ENCODE measurements at regions of chr14 and their contacts with region 1.

Region 1: GRCh38 chr14:34461334-34462131 is 507 bp downstream of the SPTSSA start:
- DNase-seq: peak in 1 of 2 donors; percentile 66
- ATAC-seq: peak; percentile 65
- H3K4me3 ChIP-seq: peak overlapping the region; percentile 63 to 95
- H3K27ac ChIP-seq: peak overlapping the region; percentile 67 to 98
- H3K4me1 ChIP-seq: no peaks in the 10 kb centered on the region
- H3K27me3 ChIP-seq: no peaks in the 10 kb centered on the region

Region 2: DNA sequence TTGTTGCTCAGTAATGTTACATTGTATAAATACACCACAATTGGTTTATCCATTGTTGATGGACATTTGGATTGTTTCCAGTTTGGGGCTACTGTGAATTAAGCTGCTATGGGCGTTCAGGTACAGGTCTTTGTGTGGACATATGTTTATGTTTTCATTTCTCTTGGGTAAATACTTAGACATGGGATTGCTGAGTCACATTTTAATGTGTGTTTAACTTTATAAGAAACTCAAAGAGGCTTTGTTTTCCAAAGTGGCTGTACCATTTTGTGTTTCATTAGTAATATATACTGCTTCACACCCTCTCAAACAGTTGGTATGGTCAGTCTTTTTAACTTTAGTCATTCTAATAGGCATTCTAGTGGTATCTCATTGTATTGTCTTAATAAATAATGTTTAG is 224.5 kb before region 1 on chr14:
- intact Hi-C with region 1: no loop called
- DNase-seq: no peak
- ATAC-seq: no peak
- H3K4me3 ChIP-seq: no peak overlapping the region
- H3K27ac ChIP-seq: no peak overlapping the region
- H3K4me1 ChIP-seq: peaks cover 3 to 4% of the 10 kb centered on the region in 2 donors
- H3K27me3 ChIP-seq: no peaks in the 10 kb centered on the region

Region 3: GRCh38 chr14:34539407-34540180 is 78.1 kb after region 1 on chr14 and contains the start of gene EAPP:
- intact Hi-C with region 1: loop called (anchors 5 to 10 kb)
- DNase-seq: peak; percentile 99
- ATAC-seq: peak; percentile 99
- H3K4me3 ChIP-seq: peak within 1 kb of the TSS; percentile 84 to 90
- H3K27ac ChIP-seq: peak within 1 kb of the TSS; percentile 71 to 93
- H3K4me1 ChIP-seq: peaks cover 3 to 4% of the 10 kb centered on the region in 2 donors
- H3K27me3 ChIP-seq: no peaks in the 10 kb centered on the region
- total RNA-seq, gene EAPP: 28.1 to 32.2 TPM